Activated CD4-positive, alpha-beta T cell treated with anti-CD3 and anti-CD28 coated beads for 36 hours (primary cell): ENCODE measurements at regions of chr16 and their contacts with region 1.

Region 1: DNA sequence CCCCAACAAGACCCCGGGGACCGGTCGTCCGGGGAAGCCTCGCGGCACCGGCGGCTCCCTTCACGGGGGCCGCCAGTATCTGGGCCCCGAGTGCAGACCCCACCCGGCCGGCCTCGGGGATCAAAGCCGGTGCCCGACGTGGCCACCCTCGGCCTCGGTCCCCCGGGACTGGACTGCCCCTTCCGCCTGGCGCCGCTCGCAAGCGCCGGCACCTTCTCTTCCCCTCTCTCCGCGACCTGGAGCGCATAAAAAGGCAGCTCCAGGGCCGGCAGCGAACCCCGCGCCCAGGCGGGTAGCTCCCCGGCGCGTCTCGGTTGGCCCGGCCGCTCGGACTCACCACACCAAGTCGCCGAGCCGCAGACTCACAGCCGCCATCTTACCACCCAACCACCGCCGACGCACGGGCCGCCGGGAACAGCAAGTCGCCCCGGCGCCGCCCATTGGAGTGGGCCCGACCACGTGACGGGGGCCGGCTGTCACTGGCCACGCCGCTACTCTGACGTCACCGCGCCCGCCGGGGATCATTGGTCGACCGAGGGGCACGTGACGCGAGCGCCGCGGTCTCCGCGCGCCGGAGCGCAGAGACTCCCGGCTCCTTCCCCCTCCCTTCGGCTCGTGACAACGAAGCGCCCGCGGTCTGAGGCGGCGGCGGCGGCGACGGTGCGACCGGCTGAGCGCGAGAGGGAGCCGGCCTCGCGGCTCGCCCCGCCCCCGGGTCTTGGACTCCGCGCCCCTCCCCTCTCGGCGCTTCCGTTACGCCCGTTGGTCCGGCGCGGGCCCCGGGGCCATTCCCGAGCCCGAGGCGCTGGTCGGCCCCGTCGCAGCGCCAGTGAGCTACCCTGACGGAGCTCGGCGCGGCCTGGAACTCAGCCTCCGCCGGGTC is at the starts of genes GLYR1 and UBN1:
- DNase-seq: peak; percentile 100
- ATAC-seq: peak; percentile 96
- H3K4me3 Mint-ChIP-seq: peak within 1 kb of the TSS; percentile 77
- H3K27ac Mint-ChIP-seq: peak within 1 kb of the TSS; percentile 84
- H3K4me1 Mint-ChIP-seq: peaks cover 54% of the 10 kb centered on the region
- H3K27me3 Mint-ChIP-seq: no peaks in the 10 kb centered on the region
- total RNA-seq, gene GLYR1: 76.9 to 78.4 TPM
- total RNA-seq, gene UBN1: 19.3 to 23.0 TPM

Region 2: DNA sequence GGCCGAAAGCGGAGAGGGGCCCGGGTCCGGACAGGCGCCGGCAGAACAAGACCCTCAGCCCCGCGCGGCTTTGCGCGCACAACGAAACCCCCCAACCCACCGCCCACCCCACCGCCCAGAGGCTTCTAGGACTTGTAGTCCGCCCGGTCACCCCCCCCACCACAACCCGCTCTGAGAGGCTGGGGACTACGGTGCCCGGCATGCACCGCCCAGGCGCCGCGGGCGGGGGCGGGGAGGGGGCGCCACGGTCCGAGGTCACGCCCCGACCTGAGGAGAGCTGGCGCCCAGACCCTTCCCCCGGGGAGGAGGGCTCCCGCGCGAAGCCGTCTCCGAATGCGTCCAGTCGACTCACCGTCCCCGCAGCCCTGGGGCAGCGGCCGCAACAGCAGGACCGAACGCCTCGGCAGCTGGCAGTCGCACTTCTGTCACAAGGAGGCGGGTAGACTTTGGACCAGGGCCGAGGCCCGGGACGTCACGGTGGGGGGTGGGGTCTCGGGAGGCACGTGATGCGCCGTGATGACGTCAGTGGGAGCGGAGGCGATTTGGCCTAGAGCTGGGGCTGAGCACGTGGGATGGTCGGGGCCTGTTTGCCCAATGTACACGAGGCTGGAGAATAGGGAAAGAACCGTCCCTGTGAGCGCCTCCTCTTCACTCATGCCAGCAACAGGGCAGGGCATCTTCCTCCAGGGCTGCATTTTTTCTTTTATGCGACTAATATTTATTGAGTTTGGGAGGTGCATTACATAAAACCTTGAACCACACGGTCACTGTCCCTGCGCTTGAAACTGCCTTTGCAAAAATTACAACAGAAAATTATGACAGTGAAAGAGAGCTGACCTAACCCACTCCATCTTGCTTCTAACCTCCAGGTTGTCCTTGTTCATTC is 308.5 kb before region 1 on chr16 and contains the start of gene CDIP1:
- CTCF ChIA-PET with region 1: no interaction called
- POLR2A ChIA-PET with region 1: no interaction called
- intact Hi-C with region 1: loop called in 1 of 2 experiments (anchors 1 kb)
- DNase-seq: peak; percentile 99
- ATAC-seq: peak; percentile 81
- H3K4me3 Mint-ChIP-seq: peak within 1 kb of the TSS; percentile 75
- H3K27ac Mint-ChIP-seq: peak within 1 kb of the TSS; percentile 63
- H3K4me1 Mint-ChIP-seq: peaks cover 41% of the 10 kb centered on the region
- H3K27me3 Mint-ChIP-seq: no peaks in the 10 kb centered on the region
- total RNA-seq, gene CDIP1: 28.3 to 30.2 TPM

Region 3: GRCh38 chr16:4766874-4767628 is 80.1 kb before region 1 on chr16 and contains the start of gene ZNF500:
- CTCF ChIA-PET with region 1: no interaction called
- POLR2A ChIA-PET with region 1: no interaction called
- intact Hi-C with region 1: loop called in 1 of 2 experiments (anchors 1 kb)
- DNase-seq: peak; percentile 97
- ATAC-seq: peak; percentile 78
- H3K4me3 Mint-ChIP-seq: peak within 1 kb of the TSS; percentile 89
- H3K27ac Mint-ChIP-seq: peak within 1 kb of the TSS; percentile 91
- H3K4me1 Mint-ChIP-seq: peaks cover 25% of the 10 kb centered on the region
- H3K27me3 Mint-ChIP-seq: no peaks in the 10 kb centered on the region
- total RNA-seq, gene ZNF500: 10.3 to 11.6 TPM

Region 4: GRCh38 chr16:4957720-4958509 is 110.8 kb after region 1 on chr16 and contains the start of gene SEC14L5:
- CTCF ChIA-PET with region 1: interaction called, 3 read pairs
- POLR2A ChIA-PET with region 1: no interaction called
- intact Hi-C with region 1: loop called (anchors 1 to 5 kb)
- DNase-seq: peak; percentile 98
- ATAC-seq: peak; percentile 95
- H3K4me3 Mint-ChIP-seq: peak within 1 kb of the TSS; percentile 75
- H3K27ac Mint-ChIP-seq: peak within 1 kb of the TSS; percentile 1
- H3K4me1 Mint-ChIP-seq: peaks cover 12% of the 10 kb centered on the region
- H3K27me3 Mint-ChIP-seq: peaks cover 33% of the 10 kb centered on the region
- total RNA-seq, gene SEC14L5: 0.09 to 0.28 TPM

Region 5: GRCh38 chr16:4976079-4976478 is 128.9 kb after region 1 on chr16:
- CTCF ChIA-PET with region 1: no interaction called
- POLR2A ChIA-PET with region 1: no interaction called
- intact Hi-C with region 1: no loop called
- DNase-seq: no peak
- ATAC-seq: no peak
- H3K4me3 Mint-ChIP-seq: no peak overlapping the region
- H3K27ac Mint-ChIP-seq: no peak overlapping the region
- H3K4me1 Mint-ChIP-seq: peaks cover 2% of the 10 kb centered on the region
- H3K27me3 Mint-ChIP-seq: peaks cover 12% of the 10 kb centered on the region